ENCODE measurements at regions of chr6 and their contacts with region 1.

Region 1: DNA sequence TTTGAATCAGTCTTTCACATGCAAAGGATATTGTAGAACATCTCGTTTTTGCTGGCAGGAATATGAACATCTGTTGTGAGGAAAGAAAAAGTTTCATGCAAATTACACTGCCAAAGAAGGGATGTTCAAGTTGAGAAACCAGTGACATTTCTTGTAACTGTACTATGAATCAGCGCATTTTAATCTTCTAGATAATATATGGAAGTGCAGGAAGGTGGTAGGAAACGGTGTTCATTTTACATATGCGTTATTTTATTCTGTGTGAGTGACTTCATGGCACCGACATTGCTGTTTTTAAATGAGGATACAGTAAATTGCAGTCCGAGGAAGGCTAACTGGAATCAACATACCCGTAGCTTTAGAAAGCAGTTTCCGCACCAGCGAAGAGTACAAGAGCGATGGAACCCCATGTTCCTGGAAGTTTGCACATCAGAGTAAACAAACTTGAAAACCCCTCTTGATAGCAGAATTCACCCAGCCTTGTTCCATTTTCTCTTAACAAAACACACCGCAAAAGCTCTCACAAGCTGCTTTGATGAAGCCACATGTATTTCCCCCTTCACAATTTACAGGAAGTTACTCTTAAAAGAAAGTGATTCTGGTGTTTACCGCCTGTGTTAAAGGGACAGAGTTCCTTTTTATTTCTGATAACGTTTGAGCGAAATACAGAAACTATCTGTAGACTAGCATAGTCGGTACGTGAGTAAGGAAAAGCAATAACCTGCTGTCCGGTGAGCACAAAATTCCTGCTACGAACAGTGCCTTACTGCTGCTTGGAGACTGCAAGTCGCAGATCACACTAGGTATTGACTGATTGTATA is 11.5 kb downstream of the PRDM1 start:
- DNase-seq: peak; percentile 67
- ATAC-seq: peak; percentile 30
- H3K4me3 Mint-ChIP-seq: peak overlapping the region; percentile 82
- H3K27ac Mint-ChIP-seq: peak overlapping the region; percentile 98
- H3K4me1 Mint-ChIP-seq: peaks cover 88% of the 10 kb centered on the region
- H3K27me3 Mint-ChIP-seq: peaks cover 7% of the 10 kb centered on the region

Region 2: GRCh38 chr6:105646391-105646867 is 451.2 kb before region 1 on chr6:
- CTCF ChIA-PET with region 1: no interaction called
- POLR2A ChIA-PET with region 1: interaction called, 3 read pairs
- intact Hi-C with region 1: loop called (anchors 1 to 2 kb)
- DNase-seq: peak; percentile 53
- ATAC-seq: peak; percentile 90
- H3K4me3 Mint-ChIP-seq: no peak overlapping the region
- H3K27ac Mint-ChIP-seq: no peak overlapping the region
- H3K4me1 Mint-ChIP-seq: peaks cover 62% of the 10 kb centered on the region
- H3K27me3 Mint-ChIP-seq: peaks cover 44% of the 10 kb centered on the region

Region 3: GRCh38 chr6:105920071-105920470 is 177.6 kb before region 1 on chr6:
- CTCF ChIA-PET with region 1: no interaction called
- POLR2A ChIA-PET with region 1: no interaction called
- intact Hi-C with region 1: loop called (anchors 1 to 5 kb)
- DNase-seq: peak; percentile 29
- ATAC-seq: peak; percentile 88
- H3K4me3 Mint-ChIP-seq: no peak overlapping the region
- H3K27ac Mint-ChIP-seq: peak overlapping the region; percentile 26
- H3K4me1 Mint-ChIP-seq: peaks cover 10% of the 10 kb centered on the region
- H3K27me3 Mint-ChIP-seq: peaks cover 11% of the 10 kb centered on the region

Region 4: GRCh38 chr6:106114492-106115265 is 17.1 kb after region 1 on chr6:
- CTCF ChIA-PET with region 1: interaction called, 9 read pairs
- POLR2A ChIA-PET with region 1: interaction called, 16 read pairs
- intact Hi-C with region 1: loop called (anchors 1 kb)
- DNase-seq: peak; percentile 90
- ATAC-seq: peak; percentile 85
- H3K4me3 Mint-ChIP-seq: peak overlapping the region; percentile 38
- H3K27ac Mint-ChIP-seq: peak overlapping the region; percentile 85
- H3K4me1 Mint-ChIP-seq: peaks cover 83% of the 10 kb centered on the region
- H3K27me3 Mint-ChIP-seq: peaks cover 24% of the 10 kb centered on the region

Region 5: GRCh38 chr6:106194949-106195921 is 97.6 kb after region 1 on chr6:
- CTCF ChIA-PET with region 1: interaction called, 3 read pairs
- POLR2A ChIA-PET with region 1: interaction called, 5 read pairs
- intact Hi-C with region 1: loop called in 1 of 2 experiments (anchors 2 kb)
- DNase-seq: no peak
- ATAC-seq: peak; percentile 92
- H3K4me3 Mint-ChIP-seq: peak overlapping the region; percentile 37
- H3K27ac Mint-ChIP-seq: peak overlapping the region; percentile 79
- H3K4me1 Mint-ChIP-seq: peaks cover 44% of the 10 kb centered on the region
- H3K27me3 Mint-ChIP-seq: no peaks in the 10 kb centered on the region

Region 6: GRCh38 chr6:106519460-106520394 is 422.1 kb after region 1 on chr6:
- CTCF ChIA-PET with region 1: no interaction called
- POLR2A ChIA-PET with region 1: no interaction called
- intact Hi-C with region 1: loop called (anchors 1 to 5 kb)
- DNase-seq: peak; percentile 89
- ATAC-seq: peak; percentile 66
- H3K4me3 Mint-ChIP-seq: peak overlapping the region; percentile 88
- H3K27ac Mint-ChIP-seq: peak overlapping the region; percentile 99
- H3K4me1 Mint-ChIP-seq: peaks cover 71% of the 10 kb centered on the region
- H3K27me3 Mint-ChIP-seq: no peaks in the 10 kb centered on the region

Measured in activated CD4-positive, alpha-beta T cell treated with anti-CD3 and anti-CD28 coated beads for 36 hours (primary cell).